ENCODE measurements at regions of chr12 and their contacts with region 1.

Region 1: GRCh38 chr12:120528861-120529525 is at the start of gene COQ5:
- DNase-seq: peak; percentile 92 to 97
- ATAC-seq: peak; percentile 97
- H3K4me3 ChIP-seq: peak within 1 kb of the TSS; percentile 54 to 94
- H3K27ac ChIP-seq: peak within 1 kb of the TSS in 1 of 2 donors; percentile 93
- H3K4me1 ChIP-seq: no peaks in the 10 kb centered on the region
- H3K27me3 ChIP-seq: no peaks in the 10 kb centered on the region
- total RNA-seq, gene COQ5: 12.0 to 18.3 TPM

Region 2: DNA sequence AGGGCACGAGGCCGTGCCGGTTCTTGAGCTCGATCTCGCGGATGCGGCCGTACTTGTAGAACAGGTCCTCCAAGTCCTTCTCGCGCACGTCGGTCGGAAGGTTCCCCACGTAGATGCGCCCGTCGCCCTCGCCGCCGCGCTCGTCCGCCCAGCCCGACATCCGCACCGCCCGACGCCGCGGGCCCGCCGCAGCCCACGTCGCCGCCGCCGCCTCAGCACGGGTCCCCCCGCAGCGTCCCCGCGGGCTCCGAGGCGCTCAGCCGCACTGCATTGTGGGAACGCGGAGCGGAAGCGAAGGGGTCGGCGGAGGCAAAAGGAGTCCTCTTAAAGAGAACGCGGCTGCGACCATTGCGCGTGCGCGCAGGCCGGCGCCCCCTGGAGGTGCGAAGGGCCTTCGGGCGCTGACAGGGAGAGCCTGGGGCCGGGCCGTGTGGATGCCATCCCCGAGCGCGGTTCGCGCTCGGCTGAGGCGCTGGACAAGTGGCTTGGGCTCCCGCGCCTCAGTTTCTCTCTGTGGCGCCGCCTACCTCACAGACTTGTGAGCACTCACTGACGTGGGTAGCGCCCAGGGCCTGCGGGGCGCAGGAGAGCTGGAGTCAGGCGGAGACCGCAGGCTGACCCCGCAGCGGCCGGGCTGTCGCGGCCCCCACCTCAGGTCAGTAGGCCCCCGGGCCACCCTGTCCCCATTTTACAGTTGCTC is 59.4 kb before region 1 on chr12 and contains the start of gene SRSF9:
- intact Hi-C with region 1: loop called in 1 of 2 experiments (anchors 2 kb)
- DNase-seq: peak; percentile 97 to 99
- ATAC-seq: peak; percentile 98
- H3K4me3 ChIP-seq: peak within 1 kb of the TSS; percentile 92 to 93
- H3K27ac ChIP-seq: peak within 1 kb of the TSS in 1 of 2 donors; percentile 94
- H3K4me1 ChIP-seq: no peaks in the 10 kb centered on the region
- H3K27me3 ChIP-seq: no peaks in the 10 kb centered on the region
- total RNA-seq, gene SRSF9: 91.2 to 96.6 TPM

Region 3: GRCh38 chr12:120495723-120496412 is 33.1 kb before region 1 on chr12 and contains the start of gene DYNLL1:
- intact Hi-C with region 1: no loop called
- DNase-seq: peak; percentile 97 to 98
- ATAC-seq: peak; percentile 99
- H3K4me3 ChIP-seq: peak within 1 kb of the TSS; percentile 77 to 90
- H3K27ac ChIP-seq: peak within 1 kb of the TSS; percentile 31 to 46
- H3K4me1 ChIP-seq: peaks cover 0 to 6% of the 10 kb centered on the region in 2 donors
- H3K27me3 ChIP-seq: no peaks in the 10 kb centered on the region
- total RNA-seq, gene DYNLL1: 236 to 262 TPM